ENCODE measurements at regions of chr2 and their contacts with region 1.

Region 1: DNA sequence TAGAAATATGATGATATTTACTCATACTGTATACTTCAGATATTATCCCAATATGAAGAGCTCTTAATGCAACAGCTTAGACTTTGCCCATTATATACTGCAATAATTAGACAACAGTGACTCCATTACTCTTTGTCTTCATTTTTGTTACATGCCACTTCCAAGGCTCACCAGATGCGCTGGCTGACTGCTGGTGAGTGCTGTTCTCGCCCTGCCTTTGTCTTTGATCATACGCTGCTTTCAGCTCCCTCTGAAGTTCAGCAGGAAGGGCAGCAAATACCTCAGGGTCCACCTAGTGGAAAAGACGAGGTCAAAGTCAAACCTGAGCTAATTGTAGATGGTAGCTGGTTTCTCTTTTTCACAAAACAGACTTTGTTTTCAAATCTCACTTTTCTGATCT is 66.3 kb downstream of the EIF5B start:
- DNase-seq: no peak
- H3K4me3 ChIP-seq: no peak overlapping the region
- H3K27ac ChIP-seq: no peak overlapping the region
- H3K4me1 ChIP-seq: no peaks in the 10 kb centered on the region
- H3K27me3 ChIP-seq: no peaks in the 10 kb centered on the region
- CTCF ChIP-seq: no peak

Region 2: DNA sequence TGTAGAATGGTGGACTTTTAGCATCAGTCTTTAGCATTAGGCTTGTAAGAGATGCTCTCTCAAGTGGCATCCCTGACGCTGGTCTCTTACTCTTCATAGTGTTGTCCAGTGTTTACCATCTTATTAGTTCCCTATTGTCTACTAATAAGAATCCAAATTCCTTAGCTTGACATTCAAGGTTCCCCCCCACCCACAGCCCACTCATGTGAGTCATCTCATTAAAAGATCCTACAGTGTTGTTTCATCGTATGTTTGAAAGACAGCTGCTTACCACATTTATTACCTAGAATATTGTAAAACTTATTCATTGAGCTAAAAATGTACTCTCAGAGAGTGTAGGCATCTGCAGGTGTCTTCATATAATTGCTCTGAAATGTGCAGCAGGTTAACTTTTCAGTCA is 37.9 kb before region 1 on chr2:
- intact Hi-C with region 1: loop called (anchors 5 kb)
- DNase-seq: no peak
- H3K4me3 ChIP-seq: no peak overlapping the region
- H3K27ac ChIP-seq: no peak overlapping the region
- H3K4me1 ChIP-seq: no peaks in the 10 kb centered on the region
- H3K27me3 ChIP-seq: no peaks in the 10 kb centered on the region
- CTCF ChIP-seq: no peak

Region 3: GRCh38 chr2:99880148-99880963 is 476.8 kb after region 1 on chr2:
- intact Hi-C with region 1: no loop called
- DNase-seq: no peak
- H3K4me3 ChIP-seq: no peak overlapping the region
- H3K27ac ChIP-seq: peak overlapping the region in 1 of 2 donors; percentile 13
- H3K4me1 ChIP-seq: peaks cover 0 to 51% (median 20%) of the 10 kb centered on the region in 4 donors
- H3K27me3 ChIP-seq: no peaks in the 10 kb centered on the region
- CTCF ChIP-seq: no peak